ENCODE measurements at regions of chr6 and their contacts with region 1.

Region 1: GRCh38 chr6:8219352-8219943 is 117.1 kb upstream of the EEF1E1 start:
- DNase-seq: peak; percentile 43
- ATAC-seq: peak; percentile 42
- H3K4me3 Mint-ChIP-seq: no peak overlapping the region
- H3K27ac Mint-ChIP-seq: no peak overlapping the region
- H3K4me1 Mint-ChIP-seq: no peaks in the 10 kb centered on the region
- H3K27me3 Mint-ChIP-seq: no peaks in the 10 kb centered on the region

Region 2: DNA sequence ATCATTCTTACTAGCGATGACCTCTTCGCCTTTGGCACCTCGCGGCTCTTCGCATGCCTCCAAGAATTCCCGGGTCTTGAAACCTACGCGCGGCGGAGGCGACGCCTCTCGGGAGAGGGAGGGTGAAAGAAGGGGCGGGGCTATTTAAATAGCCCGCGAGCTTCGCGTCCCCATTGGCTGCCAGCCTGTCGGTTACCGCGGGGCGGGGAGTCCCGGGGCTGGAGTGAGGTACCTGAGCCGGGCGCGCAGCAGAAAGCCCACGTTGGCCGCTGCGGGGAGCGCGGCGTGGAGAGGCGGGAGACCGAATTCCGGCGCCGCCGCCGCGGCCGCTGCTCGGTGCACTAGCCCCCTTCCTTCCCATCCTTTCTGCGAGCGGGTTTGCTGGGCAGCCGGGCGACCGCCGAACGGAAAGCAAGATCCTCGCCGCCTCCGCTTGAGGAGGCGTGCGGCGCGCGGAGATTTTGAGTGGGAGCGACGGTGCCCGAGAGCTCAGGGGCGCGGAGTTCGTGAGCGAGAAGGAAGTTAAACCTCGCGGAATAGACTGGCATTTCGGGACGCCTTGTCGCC is 493.5 kb before region 1 on chr6 and contains the start of gene BMP6:
- CTCF ChIA-PET with region 1: interaction called, 12 read pairs
- DNase-seq: peak; percentile 74
- ATAC-seq: peak; percentile 87
- H3K4me3 Mint-ChIP-seq: peak within 1 kb of the TSS; percentile 65
- H3K27ac Mint-ChIP-seq: no peak within 1 kb of the TSS
- H3K4me1 Mint-ChIP-seq: peaks cover 13% of the 10 kb centered on the region
- H3K27me3 Mint-ChIP-seq: peaks cover 80% of the 10 kb centered on the region
- total RNA-seq, gene BMP6: not detected

Region 3: DNA sequence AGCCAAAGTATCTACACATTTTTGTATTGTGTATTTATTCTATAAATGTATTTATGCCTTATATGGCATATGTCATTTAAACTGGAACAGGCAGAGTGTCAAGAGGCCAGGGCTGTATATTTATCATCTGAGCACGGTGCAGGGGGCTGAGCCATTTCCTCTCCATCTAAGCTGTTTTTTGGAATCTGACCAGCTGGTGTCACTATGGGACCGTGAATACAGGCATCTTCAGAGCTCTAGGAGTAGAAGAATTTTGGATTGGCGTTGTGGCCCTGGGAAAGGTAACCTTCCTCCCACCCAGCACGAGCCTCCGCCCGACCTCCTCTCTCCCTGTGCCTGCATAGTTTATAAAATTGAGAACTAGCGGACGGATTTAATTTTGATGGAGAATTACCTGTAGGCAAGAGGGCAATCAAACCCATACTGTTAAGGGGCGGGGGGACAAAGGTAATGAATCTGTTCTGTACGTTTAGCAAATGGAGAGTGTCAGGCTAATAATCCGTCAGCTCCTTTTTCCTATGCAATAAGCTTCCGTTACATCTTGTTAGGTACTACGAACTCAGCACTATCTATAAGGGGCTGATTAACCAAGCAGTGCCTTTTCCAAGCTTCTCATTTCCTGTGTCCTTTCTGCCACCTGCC is 88.1 kb before region 1 on chr6:
- CTCF ChIA-PET with region 1: interaction called, 37 read pairs
- DNase-seq: peak; percentile 45
- ATAC-seq: no peak
- H3K4me3 Mint-ChIP-seq: no peak overlapping the region
- H3K27ac Mint-ChIP-seq: no peak overlapping the region
- H3K4me1 Mint-ChIP-seq: no peaks in the 10 kb centered on the region
- H3K27me3 Mint-ChIP-seq: peaks cover 16% of the 10 kb centered on the region

Region 4: DNA sequence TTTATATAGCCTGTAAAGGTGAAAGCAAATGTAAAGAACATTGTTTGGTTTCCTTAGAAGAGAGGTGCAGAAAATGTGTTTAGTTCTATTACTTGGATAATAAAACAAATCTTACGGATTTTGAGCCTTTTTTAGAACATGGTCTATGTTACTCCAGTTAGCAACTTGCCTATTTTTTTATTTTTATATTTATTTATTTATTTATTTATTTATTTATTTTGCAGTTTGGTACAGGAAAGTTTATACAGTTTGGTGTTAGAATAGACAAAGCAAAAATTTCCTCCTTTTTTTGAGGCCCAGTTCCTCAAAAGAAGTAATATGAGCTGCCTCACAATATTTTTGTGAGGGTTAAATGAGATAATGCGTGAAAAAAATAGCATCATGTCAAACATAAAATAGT is 75.5 kb before region 1 on chr6:
- CTCF ChIA-PET with region 1: no interaction called
- DNase-seq: no peak
- ATAC-seq: no peak
- H3K4me3 Mint-ChIP-seq: no peak overlapping the region
- H3K27ac Mint-ChIP-seq: no peak overlapping the region
- H3K4me1 Mint-ChIP-seq: no peaks in the 10 kb centered on the region
- H3K27me3 Mint-ChIP-seq: peaks cover 5% of the 10 kb centered on the region

Measured in activated CD8-positive, alpha-beta memory T cell treated with anti-CD3 and anti-CD28 coated beads, Interleukin-2, amount 10 ng/mL, durations not matched to agents 7 days and 5 days (primary cell).